CD14-positive monocyte (primary cell): ENCODE measurements at regions of chr2 and their contacts with region 1.

Region 1: GRCh38 chr2:218745559-218746469 is 35.2 kb downstream of the TTLL4 start:
- DNase-seq: no peak
- H3K4me3 ChIP-seq: peak overlapping the region in 1 of 3 experiments; percentile 29
- H3K4me3 Mint-ChIP-seq: peak overlapping the region in 1 of 2 donors; percentile 69
- H3K27ac ChIP-seq: peak overlapping the region; percentile 95 to 98
- H3K27ac Mint-ChIP-seq: peak overlapping the region; percentile 96 to 100 (median 100)
- H3K4me1 ChIP-seq: peaks cover 72 to 80% of the 10 kb centered on the region in 2 donors
- H3K4me1 Mint-ChIP-seq: peaks cover 72% of the 10 kb centered on the region
- H3K27me3 ChIP-seq: no peaks in the 10 kb centered on the region
- H3K27me3 Mint-ChIP-seq: peaks cover 0 to 3% (median 2%) of the 10 kb centered on the region in 3 donors
- CTCF ChIP-seq: no peak

Region 2: GRCh38 chr2:218429571-218430301 is 316.1 kb before region 1 on chr2:
- intact Hi-C with region 1: no loop called
- DNase-seq: no peak
- H3K4me3 ChIP-seq: no peak overlapping the region
- H3K4me3 Mint-ChIP-seq: no peak overlapping the region
- H3K27ac ChIP-seq: no peak overlapping the region
- H3K27ac Mint-ChIP-seq: no peak overlapping the region
- H3K4me1 ChIP-seq: no peaks in the 10 kb centered on the region
- H3K4me1 Mint-ChIP-seq: no peaks in the 10 kb centered on the region
- H3K27me3 ChIP-seq: no peaks in the 10 kb centered on the region
- H3K27me3 Mint-ChIP-seq: peaks cover 3 to 6% (median 4%) of the 10 kb centered on the region in 3 donors
- CTCF ChIP-seq: no peak

Region 3: DNA sequence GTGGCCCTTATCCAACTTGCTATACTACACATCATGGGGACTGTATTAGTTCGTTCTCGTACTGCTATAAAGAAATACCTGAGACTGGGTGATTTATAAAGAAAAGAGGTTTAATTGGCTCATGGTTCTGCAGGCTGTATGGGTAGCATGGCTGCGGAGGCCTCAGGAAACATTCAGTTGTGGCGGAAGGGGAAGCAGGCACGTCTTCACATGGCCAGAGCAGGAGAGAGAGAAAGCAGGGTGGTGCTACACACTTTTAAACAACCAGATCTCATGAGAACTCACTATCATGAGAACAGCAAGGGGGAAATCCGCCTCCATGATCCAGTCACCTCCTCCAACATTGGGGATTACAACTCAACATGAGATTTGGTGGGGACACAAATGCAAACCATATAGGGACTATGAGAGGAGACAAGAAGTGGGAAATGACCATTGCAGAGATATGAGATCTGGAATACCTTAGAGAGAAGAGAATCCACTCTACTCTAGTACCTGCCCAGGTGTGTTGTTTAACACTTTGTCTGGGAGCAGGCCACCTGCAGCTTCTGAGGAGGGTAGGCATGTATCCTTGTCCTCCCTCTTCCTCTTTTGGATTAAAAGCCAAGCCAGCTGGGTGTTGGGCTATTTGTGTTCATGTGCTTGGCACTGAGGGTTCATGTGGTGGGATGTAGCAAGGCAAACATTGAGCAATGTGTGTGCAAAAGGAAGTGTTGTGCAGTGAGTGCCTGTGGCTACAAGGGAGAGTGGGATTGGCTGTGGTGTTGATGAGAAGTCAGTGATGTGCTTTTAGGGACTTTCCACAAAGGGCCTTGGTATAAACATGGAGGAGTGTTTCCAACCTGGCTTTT is 12.4 kb before region 1 on chr2:
- intact Hi-C with region 1: loop called in 1 of 2 experiments (anchors 1 kb)
- DNase-seq: peak; percentile 98 to 100 (median 98)
- H3K4me3 ChIP-seq: peak overlapping the region in 1 of 3 experiments; percentile 8
- H3K4me3 Mint-ChIP-seq: peak overlapping the region; percentile 31 to 57
- H3K27ac ChIP-seq: peak overlapping the region; percentile 95 to 99
- H3K27ac Mint-ChIP-seq: peak overlapping the region; percentile 98 to 100 (median 100)
- H3K4me1 ChIP-seq: peaks cover 51 to 54% of the 10 kb centered on the region in 2 donors
- H3K4me1 Mint-ChIP-seq: peaks cover 67% of the 10 kb centered on the region
- H3K27me3 ChIP-seq: no peaks in the 10 kb centered on the region
- H3K27me3 Mint-ChIP-seq: peaks cover 0 to 1% (median 0%) of the 10 kb centered on the region in 3 donors
- CTCF ChIP-seq: no peak

Region 4: DNA sequence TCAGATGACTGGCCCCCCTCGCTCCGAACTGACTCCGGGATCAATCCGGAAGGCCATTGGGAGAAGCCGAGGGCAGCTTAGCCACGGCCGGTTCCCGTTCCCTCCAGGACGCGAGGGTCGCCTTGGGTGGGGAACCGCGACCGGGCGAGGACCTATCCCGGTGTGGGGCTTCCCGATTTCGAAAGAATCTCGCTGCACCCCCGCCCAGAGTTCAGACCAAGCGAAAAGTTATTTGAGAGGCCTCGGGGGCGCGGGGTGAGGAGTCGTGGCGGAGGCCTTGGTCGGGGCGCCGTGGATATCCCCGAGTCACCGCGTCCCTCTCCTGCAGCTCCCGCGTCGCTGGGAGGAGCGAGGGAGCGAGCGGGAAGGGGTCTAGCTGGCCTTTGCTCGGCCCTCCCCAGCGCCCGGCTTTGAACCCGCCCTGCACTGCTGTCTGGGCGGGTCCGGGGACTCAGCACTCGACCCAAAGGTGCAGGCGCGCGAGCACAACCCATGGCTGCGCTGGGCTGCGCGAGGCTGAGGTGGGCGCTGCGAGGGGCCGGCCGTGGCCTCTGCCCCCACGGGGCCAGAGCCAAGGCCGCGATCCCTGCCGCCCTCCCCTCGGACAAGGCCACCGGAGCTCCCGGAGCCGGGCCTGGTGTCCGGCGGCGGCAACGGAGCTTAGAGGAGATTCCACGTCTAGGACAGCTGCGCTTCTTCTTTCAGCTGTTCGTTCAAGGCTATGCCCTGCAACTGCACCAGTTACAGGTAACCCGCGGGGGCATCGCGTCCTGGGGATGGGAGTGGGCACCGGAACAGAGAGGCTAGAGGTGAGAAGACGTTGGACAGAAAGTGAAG is 36.1 kb after region 1 on chr2 and contains the start of gene CYP27A1:
- intact Hi-C with region 1: loop called in 1 of 2 experiments (anchors 5 kb)
- DNase-seq: peak; percentile 31 to 39 (median 38)
- H3K4me3 ChIP-seq: peak within 1 kb of the TSS; percentile 62 to 93 (median 72)
- H3K4me3 Mint-ChIP-seq: peak within 1 kb of the TSS; percentile 97 to 100
- H3K27ac ChIP-seq: peak within 1 kb of the TSS; percentile 41 to 83
- H3K27ac Mint-ChIP-seq: peak within 1 kb of the TSS; percentile 45 to 94 (median 75)
- H3K4me1 ChIP-seq: peaks cover 21 to 49% of the 10 kb centered on the region in 2 donors
- H3K4me1 Mint-ChIP-seq: peaks cover 52% of the 10 kb centered on the region
- H3K27me3 ChIP-seq: peaks cover 10 to 60% of the 10 kb centered on the region in 2 donors
- H3K27me3 Mint-ChIP-seq: peaks cover 42 to 57% (median 48%) of the 10 kb centered on the region in 3 donors
- CTCF ChIP-seq: no peak
- polyA plus RNA-seq, gene CYP27A1: 151 to 218 (median 214) TPM